ENCODE measurements at regions of chr1 and their contacts with region 1.

Region 1: DNA sequence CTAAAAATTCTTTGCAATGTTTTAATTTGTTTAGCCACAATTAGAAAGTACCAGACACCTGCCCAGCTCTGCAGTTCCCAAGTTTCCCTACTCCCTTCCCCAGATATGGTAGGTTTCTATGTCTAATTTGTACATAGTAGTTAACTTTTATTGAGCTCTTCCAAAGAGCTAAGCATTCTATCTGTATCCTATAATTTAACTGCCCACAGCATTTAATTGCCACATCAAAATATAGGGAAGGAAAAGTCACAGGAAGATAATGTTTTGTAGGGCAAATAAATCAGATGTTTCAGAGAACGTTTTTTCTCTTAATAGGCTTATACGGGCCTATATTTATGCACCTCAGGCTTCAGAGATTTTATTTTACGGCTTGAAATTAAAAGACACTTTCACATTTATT is 15.7 kb upstream of the FMO3 start:
- DNase-seq: no peak
- ATAC-seq: no peak
- H3K4me3 ChIP-seq: no peak overlapping the region
- H3K27ac ChIP-seq: no peak overlapping the region
- H3K4me1 ChIP-seq: no peaks in the 10 kb centered on the region
- H3K27me3 ChIP-seq: no peaks in the 10 kb centered on the region
- CTCF ChIP-seq: no peak

Region 2: DNA sequence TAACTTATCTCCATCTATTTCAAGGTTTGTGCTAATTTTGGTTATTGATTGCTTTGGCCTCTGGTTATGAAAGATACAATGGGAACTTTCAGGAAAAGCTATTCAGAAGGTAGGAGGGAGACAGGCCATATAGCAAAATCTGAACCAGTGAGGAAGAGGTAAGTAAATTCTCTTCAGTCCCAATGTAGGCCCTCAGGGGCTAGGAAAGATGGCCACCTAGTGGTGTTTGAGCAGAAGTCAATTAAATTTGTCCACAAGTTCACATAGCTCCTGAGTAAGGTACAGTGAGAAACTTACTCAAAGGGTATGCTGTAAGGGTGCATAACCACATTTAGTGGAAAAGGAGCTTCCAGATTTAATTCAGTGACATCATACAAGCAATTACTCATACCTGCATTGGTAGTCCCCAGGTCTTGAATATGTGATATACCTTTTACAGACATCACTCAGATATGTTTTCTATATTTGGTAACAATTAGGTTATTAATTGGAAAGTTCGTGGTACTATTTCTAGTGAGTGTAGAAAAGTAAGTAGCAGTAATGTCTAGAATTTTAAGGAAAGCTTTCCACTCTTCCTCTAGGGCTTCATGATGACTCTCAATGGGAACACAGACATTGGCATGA is 151.8 kb after region 1 on chr1:
- CTCF ChIA-PET with region 1: no interaction called
- POLR2A ChIA-PET with region 1: no interaction called
- in situ Hi-C with region 1: no loop called
- intact Hi-C with region 1: loop called (anchors 5 kb)
- DNase-seq: peak; percentile 36
- ATAC-seq: peak; percentile 76
- H3K4me3 ChIP-seq: no peak overlapping the region
- H3K27ac ChIP-seq: no peak overlapping the region
- H3K4me1 ChIP-seq: no peaks in the 10 kb centered on the region
- H3K27me3 ChIP-seq: no peaks in the 10 kb centered on the region
- CTCF ChIP-seq: peak; percentile 69